Activated CD8-positive, alpha-beta T cell treated with anti-CD3 and anti-CD28 coated beads for 36 hours (primary cell): ENCODE measurements at regions of chr4 and their contacts with region 1.

Region 1: DNA sequence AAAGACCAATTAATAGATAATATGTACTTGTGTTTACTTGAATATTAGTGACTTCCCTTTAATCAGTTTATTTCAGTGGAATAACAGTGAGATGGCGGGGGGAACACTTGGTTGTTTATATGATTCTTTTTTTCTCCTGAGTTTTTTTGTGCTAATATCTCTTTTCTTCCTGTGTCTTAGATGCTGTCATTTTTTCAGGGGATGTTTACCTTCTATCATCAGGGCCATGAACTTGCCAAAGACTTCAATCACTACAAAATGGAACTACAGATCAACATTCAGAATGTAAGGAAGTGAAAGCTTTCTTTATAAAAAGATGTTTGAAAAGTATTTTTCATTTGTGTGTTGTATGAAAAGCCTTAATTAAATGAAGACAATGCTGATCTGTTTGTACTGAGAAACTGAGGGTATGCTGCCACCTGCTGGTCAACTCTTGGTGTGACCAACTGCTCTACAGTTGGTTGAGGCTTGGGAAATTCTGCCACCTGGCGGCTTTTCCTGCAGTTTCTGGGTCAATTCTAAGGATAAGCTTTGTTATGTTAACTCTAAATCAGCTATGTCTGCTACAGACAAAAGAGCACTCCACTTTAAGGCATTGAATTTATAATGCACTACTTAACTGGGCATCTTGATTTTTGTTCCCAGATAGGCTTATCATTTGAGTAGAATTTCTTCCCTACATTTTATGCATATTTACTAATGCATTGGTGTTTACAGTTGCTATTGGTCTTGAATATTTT is 134.8 kb downstream of the ARHGAP10 start:
- DNase-seq: peak; percentile 97
- ATAC-seq: peak; percentile 95
- H3K4me3 Mint-ChIP-seq: no peak overlapping the region
- H3K27ac Mint-ChIP-seq: no peak overlapping the region
- H3K4me1 Mint-ChIP-seq: no peaks in the 10 kb centered on the region
- H3K27me3 Mint-ChIP-seq: no peaks in the 10 kb centered on the region
- CTCF ChIP-seq: peak; percentile 99

Region 2: DNA sequence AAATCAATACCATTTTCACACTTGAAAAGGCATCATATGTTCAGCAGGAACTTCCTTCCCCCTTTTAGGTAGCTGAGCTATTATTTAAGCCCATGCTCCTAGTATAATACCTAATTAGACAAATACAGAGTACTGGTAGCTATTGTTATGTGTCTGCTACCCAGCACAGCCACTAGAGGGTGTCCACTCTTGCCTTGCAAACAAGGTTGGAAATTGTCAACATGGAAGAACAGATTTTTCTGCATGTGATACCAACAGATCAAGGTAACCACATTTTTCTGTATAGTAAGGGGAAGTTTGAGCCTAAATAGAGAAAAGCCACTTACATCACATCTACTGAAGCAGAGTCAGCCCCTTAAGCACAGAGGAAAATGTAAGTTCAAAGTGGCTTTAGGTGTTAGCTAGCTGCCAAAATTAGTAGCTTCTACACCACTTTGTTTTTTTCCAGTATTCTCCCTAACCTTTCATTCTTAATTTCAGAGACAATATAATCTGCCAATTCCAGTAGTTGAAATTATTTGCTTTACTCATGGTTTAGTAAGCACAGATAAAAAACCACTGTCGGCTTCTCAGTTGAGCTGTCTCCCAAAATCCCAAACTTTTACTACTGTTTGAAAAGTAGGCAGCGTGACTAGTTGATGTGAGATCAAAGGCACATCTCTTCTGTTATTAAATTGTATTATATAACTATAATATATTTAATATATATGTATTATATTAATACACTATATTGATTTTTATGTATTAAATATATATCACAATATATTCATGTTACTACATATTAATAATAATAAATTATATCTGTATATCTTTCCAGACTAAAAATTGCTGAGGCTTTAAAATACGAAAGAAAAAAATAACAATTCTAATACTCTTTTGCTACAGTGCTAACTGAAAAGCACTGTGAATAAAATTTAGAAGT is 347.6 kb before region 1 on chr4:
- CTCF ChIA-PET with region 1: interaction called, 33 read pairs
- POLR2A ChIA-PET with region 1: no interaction called
- intact Hi-C with region 1: loop called (anchors 2 kb)
- DNase-seq: peak; percentile 74
- ATAC-seq: peak; percentile 71
- H3K4me3 Mint-ChIP-seq: no peak overlapping the region
- H3K27ac Mint-ChIP-seq: no peak overlapping the region
- H3K4me1 Mint-ChIP-seq: no peaks in the 10 kb centered on the region
- H3K27me3 Mint-ChIP-seq: peaks cover 7% of the 10 kb centered on the region
- CTCF ChIP-seq: peak; percentile 87

Region 3: GRCh38 chr4:147638942-147639341 is 227.8 kb before region 1 on chr4:
- CTCF ChIA-PET with region 1: interaction called, 15 read pairs
- POLR2A ChIA-PET with region 1: no interaction called
- intact Hi-C with region 1: no loop called
- DNase-seq: no peak
- ATAC-seq: peak; percentile 42
- H3K4me3 Mint-ChIP-seq: no peak overlapping the region
- H3K27ac Mint-ChIP-seq: peak overlapping the region; percentile 56
- H3K4me1 Mint-ChIP-seq: peaks cover 24% of the 10 kb centered on the region
- H3K27me3 Mint-ChIP-seq: no peaks in the 10 kb centered on the region
- CTCF ChIP-seq: no peak

Region 4: GRCh38 chr4:147707865-147708672 is 158.6 kb before region 1 on chr4:
- CTCF ChIA-PET with region 1: interaction called, 180 read pairs
- POLR2A ChIA-PET with region 1: no interaction called
- intact Hi-C with region 1: loop called (anchors 1 kb)
- DNase-seq: peak; percentile 72
- ATAC-seq: peak; percentile 77
- H3K4me3 Mint-ChIP-seq: no peak overlapping the region
- H3K27ac Mint-ChIP-seq: no peak overlapping the region
- H3K4me1 Mint-ChIP-seq: peaks cover 3% of the 10 kb centered on the region
- H3K27me3 Mint-ChIP-seq: peaks cover 1% of the 10 kb centered on the region
- CTCF ChIP-seq: peak; percentile 96

Region 5: DNA sequence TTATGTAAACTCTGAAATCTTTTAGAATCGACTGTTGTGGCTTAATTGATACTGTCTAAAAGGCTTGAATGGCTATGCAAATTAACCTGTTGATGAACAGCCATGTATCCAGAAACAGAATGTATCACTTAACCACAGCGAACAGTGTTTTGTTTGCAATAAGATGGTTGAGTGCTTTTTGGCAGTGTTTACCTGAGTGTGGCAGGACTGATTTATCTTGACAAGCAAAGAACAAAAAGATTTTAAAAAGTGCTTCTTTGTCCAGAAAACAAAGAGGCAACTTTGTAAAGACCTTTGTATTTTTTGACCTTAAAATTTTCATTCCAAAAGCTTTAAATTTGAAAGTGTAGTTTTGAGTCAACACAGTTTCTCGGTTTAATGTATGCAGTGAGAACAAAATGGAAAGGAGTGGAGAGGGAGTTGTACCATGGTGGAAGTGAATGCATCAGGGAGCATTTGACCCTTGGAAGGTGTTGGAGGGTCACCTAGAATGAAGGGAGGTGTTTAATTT is 116.8 kb before region 1 on chr4:
- CTCF ChIA-PET with region 1: interaction called, 13 read pairs
- POLR2A ChIA-PET with region 1: no interaction called
- intact Hi-C with region 1: no loop called
- DNase-seq: no peak
- ATAC-seq: no peak
- H3K4me3 Mint-ChIP-seq: no peak overlapping the region
- H3K27ac Mint-ChIP-seq: no peak overlapping the region
- H3K4me1 Mint-ChIP-seq: no peaks in the 10 kb centered on the region
- H3K27me3 Mint-ChIP-seq: no peaks in the 10 kb centered on the region
- CTCF ChIP-seq: no peak

Region 6: GRCh38 chr4:147822128-147822527 is 44.6 kb before region 1 on chr4:
- CTCF ChIA-PET with region 1: interaction called, 16 read pairs
- POLR2A ChIA-PET with region 1: no interaction called
- intact Hi-C with region 1: no loop called
- DNase-seq: no peak
- ATAC-seq: no peak
- H3K4me3 Mint-ChIP-seq: no peak overlapping the region
- H3K27ac Mint-ChIP-seq: no peak overlapping the region
- H3K4me1 Mint-ChIP-seq: no peaks in the 10 kb centered on the region
- H3K27me3 Mint-ChIP-seq: no peaks in the 10 kb centered on the region
- CTCF ChIP-seq: no peak

Region 7: DNA sequence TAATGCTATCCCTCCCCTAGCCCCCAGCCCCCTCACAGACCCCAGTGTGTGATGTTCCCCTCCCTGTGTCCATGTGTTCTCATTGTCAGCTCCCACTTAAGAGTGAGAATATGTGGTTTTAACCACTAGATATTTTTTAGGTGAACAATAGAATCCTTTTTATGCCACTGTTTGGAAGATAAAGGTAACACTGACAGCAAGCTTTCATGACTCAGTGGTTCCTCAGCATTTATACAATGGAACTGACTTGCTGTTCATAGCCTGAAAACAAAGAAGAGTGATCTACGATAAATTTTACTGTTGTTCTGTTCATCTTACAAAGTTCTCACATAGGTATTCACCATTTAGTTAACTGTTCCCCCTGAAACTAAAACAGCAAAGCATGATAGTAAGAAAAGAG is 13.0 kb after region 1 on chr4:
- CTCF ChIA-PET with region 1: interaction called, 51 read pairs
- POLR2A ChIA-PET with region 1: interaction called, 3 read pairs
- intact Hi-C with region 1: no loop called
- DNase-seq: no peak
- ATAC-seq: no peak
- H3K4me3 Mint-ChIP-seq: no peak overlapping the region
- H3K27ac Mint-ChIP-seq: no peak overlapping the region
- H3K4me1 Mint-ChIP-seq: no peaks in the 10 kb centered on the region
- H3K27me3 Mint-ChIP-seq: no peaks in the 10 kb centered on the region
- CTCF ChIP-seq: no peak

Region 8: GRCh38 chr4:147960971-147961370 is 94.3 kb after region 1 on chr4:
- CTCF ChIA-PET with region 1: no interaction called
- POLR2A ChIA-PET with region 1: no interaction called
- intact Hi-C with region 1: no loop called
- DNase-seq: no peak
- ATAC-seq: no peak
- H3K4me3 Mint-ChIP-seq: no peak overlapping the region
- H3K27ac Mint-ChIP-seq: no peak overlapping the region
- H3K4me1 Mint-ChIP-seq: no peaks in the 10 kb centered on the region
- H3K27me3 Mint-ChIP-seq: no peaks in the 10 kb centered on the region
- CTCF ChIP-seq: no peak